CD4-positive, alpha-beta T cell (primary cell): ENCODE measurements at regions of chr16 and their contacts with region 1.

Region 1: DNA sequence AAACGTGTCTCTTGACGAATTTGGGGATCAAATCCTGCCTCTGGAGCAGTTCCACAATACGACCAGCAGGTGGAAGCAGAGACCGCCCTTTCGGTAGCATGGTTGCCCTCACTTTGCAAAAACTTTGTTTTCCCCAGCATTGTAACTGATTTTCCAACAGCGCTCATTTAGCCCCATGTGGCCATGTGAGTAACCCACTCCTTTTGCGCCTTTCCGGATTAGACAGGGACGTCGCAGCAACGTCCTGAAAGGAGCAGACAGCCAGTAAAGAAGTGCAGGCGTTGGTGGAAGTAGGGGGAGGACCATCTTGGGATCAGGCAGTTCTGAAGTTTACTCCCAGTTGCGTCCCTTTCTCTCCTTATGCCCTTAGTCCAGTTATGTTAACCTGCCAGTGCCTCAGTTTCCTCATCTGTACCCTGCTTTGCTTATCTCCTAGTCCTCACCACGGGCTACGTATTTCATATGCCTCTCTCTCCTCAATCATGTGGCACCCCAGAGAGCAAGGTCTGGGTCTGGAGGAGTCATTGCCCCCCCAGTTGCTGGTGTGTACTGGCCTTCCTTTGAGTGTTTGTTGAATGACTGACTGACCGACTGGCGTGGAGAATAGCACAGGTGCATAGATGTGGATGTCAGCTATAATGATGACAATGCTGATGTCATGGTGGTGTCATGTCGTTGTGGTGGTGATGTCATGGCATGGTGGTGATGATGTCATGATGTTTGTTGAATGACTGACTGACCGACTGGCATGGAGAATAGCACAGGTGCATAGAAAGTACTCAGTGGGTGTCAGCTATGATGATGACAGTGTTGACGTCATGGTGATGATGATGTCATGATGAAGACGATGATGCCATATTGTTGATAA is 22.3 kb downstream of the TMEM114 start:
- DNase-seq: peak; percentile 58 to 90 (median 69)
- ATAC-seq: peak; percentile 92
- H3K4me3 ChIP-seq: no peak overlapping the region
- H3K4me3 Mint-ChIP-seq: no peak overlapping the region
- H3K27ac ChIP-seq: no peak overlapping the region
- H3K27ac Mint-ChIP-seq: peak overlapping the region; percentile 58
- H3K4me1 ChIP-seq: peaks cover 9% of the 10 kb centered on the region
- H3K4me1 Mint-ChIP-seq: peaks cover 10% of the 10 kb centered on the region
- H3K27me3 ChIP-seq: peaks cover 0 to 2% of the 10 kb centered on the region in 2 experiments
- H3K27me3 Mint-ChIP-seq: peaks cover 31% of the 10 kb centered on the region
- CTCF ChIP-seq: peak; percentile 99

Region 2: GRCh38 chr16:8655184-8655717 is 87.3 kb after region 1 on chr16:
- CTCF ChIA-PET with region 1: no interaction called
- POLR2A ChIA-PET with region 1: no interaction called
- intact Hi-C with region 1: loop called (anchors 1 to 5 kb)
- DNase-seq: peak in 3 of 14 experiments; percentile 21 to 49 (median 42)
- ATAC-seq: no peak
- H3K4me3 ChIP-seq: no peak overlapping the region
- H3K4me3 Mint-ChIP-seq: no peak overlapping the region
- H3K27ac ChIP-seq: no peak overlapping the region
- H3K27ac Mint-ChIP-seq: no peak overlapping the region
- H3K4me1 ChIP-seq: no peaks in the 10 kb centered on the region
- H3K4me1 Mint-ChIP-seq: no peaks in the 10 kb centered on the region
- H3K27me3 ChIP-seq: no peaks in the 10 kb centered on the region
- H3K27me3 Mint-ChIP-seq: no peaks in the 10 kb centered on the region
- CTCF ChIP-seq: peak; percentile 37

Region 3: DNA sequence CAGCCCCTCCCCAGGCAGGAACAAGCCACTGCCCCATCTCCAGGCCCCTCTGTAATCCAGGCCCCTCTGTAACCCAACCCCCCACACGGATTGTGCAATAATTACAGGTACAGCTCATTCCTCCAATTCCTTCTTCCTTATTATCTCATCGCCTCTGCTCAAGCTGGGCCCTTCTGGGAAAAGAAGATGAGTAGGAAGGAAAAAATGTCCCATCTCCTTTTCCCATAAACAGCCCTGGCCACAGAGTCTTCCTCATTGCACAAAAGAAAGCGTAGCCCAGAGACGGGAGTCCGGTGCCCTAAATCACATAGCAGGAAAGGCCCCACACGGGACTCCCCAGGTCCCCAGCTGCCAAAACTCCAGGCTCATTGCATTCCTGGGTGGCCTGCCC is 310.5 kb after region 1 on chr16:
- CTCF ChIA-PET with region 1: interaction called, 4 read pairs
- POLR2A ChIA-PET with region 1: no interaction called
- intact Hi-C with region 1: loop called (anchors 1 kb)
- DNase-seq: no peak
- ATAC-seq: no peak
- H3K4me3 ChIP-seq: no peak overlapping the region
- H3K4me3 Mint-ChIP-seq: no peak overlapping the region
- H3K27ac ChIP-seq: no peak overlapping the region
- H3K27ac Mint-ChIP-seq: no peak overlapping the region
- H3K4me1 ChIP-seq: peaks cover 19% of the 10 kb centered on the region
- H3K4me1 Mint-ChIP-seq: peaks cover 10% of the 10 kb centered on the region
- H3K27me3 ChIP-seq: peaks cover 0 to 2% of the 10 kb centered on the region in 2 experiments
- H3K27me3 Mint-ChIP-seq: no peaks in the 10 kb centered on the region
- CTCF ChIP-seq: no peak

Region 4: DNA sequence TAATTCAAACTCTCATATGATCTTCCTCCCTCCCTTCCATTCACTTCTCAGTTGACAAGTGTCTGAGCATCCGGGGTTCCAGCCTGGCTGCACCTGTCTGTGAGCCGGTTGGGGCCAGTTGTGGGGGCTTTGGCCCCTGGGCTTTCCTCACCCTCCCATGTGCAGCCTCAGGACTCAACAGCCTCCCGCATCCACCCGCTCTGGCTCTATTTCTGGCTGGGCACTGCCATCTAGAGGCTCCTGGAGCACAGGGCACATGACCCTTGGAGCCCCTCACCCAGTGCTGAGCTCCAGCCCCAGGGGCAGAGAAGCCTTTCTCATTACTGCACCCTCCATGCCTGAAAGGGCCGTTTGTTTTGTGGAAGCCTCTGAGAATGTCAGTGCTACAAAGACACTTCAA is 566.8 kb after region 1 on chr16:
- CTCF ChIA-PET with region 1: no interaction called
- POLR2A ChIA-PET with region 1: no interaction called
- intact Hi-C with region 1: loop called (anchors 1 to 2 kb)
- DNase-seq: peak; percentile 35 to 77 (median 52)
- ATAC-seq: peak; percentile 80
- H3K4me3 ChIP-seq: no peak overlapping the region
- H3K4me3 Mint-ChIP-seq: no peak overlapping the region
- H3K27ac ChIP-seq: no peak overlapping the region
- H3K27ac Mint-ChIP-seq: peak overlapping the region; percentile 47
- H3K4me1 ChIP-seq: peaks cover 22% of the 10 kb centered on the region
- H3K4me1 Mint-ChIP-seq: peaks cover 30% of the 10 kb centered on the region
- H3K27me3 ChIP-seq: peaks cover 3 to 4% of the 10 kb centered on the region in 2 experiments
- H3K27me3 Mint-ChIP-seq: no peaks in the 10 kb centered on the region
- CTCF ChIP-seq: peak; percentile 72

Region 5: DNA sequence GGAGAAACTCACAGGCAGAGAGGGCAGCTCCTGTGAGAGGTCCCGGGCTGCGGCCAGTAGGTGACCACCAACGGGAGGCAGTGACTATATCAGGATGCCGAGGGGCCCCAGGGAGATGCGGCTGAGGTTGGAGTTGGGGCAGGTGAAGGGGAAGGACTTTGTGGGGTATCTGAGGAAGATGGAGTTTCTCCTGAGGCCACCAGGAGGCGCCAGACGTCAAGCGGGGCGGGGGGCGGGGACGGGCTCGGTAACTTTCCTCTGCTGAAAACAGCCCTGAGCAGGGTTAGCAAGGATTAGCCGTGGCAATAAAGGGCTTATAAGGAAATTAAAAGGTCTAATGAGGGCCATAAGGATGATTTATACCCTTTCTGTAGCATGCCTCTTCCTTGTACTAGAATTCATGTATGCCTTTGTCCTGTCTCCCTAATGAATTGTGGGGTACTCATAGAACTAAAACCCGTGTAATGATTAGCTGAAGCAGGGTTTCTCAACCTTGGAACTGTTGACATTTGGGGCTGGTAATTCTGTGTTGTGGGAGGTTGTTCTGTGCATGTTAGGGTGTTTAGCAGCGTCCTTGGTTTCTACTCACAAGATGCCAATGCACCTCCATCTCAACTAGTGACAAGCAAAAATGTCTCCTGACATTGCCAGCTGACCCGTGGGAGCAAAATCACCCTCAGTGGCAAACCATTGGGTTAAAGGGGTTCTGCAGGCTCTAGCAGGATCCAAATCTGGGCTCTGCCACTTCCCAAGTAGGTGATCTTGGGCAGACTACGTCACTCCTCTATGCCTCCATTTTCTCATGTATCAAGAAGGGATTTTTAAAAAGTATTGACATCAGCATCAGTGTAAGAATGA is 1689.0 kb after region 1 on chr16:
- CTCF ChIA-PET with region 1: no interaction called
- POLR2A ChIA-PET with region 1: no interaction called
- intact Hi-C with region 1: loop called in 1 of 2 experiments (anchors 5 kb)
- DNase-seq: peak; percentile 11 to 77 (median 31)
- ATAC-seq: no peak
- H3K4me3 ChIP-seq: no peak overlapping the region
- H3K4me3 Mint-ChIP-seq: no peak overlapping the region
- H3K27ac ChIP-seq: no peak overlapping the region
- H3K27ac Mint-ChIP-seq: no peak overlapping the region
- H3K4me1 ChIP-seq: peaks cover 6% of the 10 kb centered on the region
- H3K4me1 Mint-ChIP-seq: peaks cover 11% of the 10 kb centered on the region
- H3K27me3 ChIP-seq: peaks cover 0 to 3% of the 10 kb centered on the region in 2 experiments
- H3K27me3 Mint-ChIP-seq: peaks cover 11% of the 10 kb centered on the region
- CTCF ChIP-seq: peak; percentile 68